ENCODE measurements at regions of chr2 and their contacts with region 1.

Region 1: DNA sequence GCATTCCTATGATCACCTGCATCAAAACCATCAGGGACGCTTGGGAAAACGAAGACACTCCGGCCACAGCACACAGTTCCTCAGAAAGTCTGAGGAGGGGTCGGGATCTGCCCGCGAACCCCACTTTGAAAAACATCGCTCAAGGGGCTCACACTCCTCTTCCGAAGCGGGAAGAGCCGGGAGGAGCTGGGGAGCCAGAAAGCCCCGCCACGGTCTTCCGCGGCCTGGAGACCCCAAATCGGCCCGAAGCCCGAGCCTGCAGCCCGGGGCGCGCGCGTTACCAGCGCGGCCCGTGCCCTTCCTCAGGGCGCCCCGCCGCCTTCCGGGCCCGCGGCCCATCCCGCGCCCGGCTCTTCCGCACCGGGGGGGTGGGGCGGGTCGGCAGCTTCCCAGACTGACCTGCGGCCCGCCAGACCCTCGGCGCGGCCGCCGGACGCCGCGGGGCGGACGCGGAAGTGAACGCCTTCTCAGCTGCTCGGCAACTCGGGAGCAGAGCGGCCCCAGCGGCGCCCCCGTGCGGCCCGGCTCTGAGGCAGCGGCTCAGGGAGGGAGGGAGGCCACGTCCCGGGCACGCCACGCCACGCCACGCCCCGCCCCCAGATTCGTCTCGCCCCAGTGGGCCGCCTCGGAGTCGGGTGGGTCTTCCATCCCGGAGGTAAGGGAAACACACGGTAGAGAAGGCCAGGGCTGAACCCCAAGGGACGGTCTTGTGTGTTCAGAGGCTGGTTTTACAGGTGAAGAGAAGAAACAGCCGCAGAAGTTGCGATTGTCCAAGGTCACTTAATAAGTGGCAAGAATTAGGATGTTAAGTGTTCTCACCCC is at the start of gene KCTD18:
- DNase-seq: peak; percentile 87 to 99 (median 94)

Region 2: GRCh38 chr2:200373973-200374416 is 135.8 kb before region 1 on chr2:
- intact Hi-C with region 1: no loop called
- DNase-seq: no peak

Region 3: DNA sequence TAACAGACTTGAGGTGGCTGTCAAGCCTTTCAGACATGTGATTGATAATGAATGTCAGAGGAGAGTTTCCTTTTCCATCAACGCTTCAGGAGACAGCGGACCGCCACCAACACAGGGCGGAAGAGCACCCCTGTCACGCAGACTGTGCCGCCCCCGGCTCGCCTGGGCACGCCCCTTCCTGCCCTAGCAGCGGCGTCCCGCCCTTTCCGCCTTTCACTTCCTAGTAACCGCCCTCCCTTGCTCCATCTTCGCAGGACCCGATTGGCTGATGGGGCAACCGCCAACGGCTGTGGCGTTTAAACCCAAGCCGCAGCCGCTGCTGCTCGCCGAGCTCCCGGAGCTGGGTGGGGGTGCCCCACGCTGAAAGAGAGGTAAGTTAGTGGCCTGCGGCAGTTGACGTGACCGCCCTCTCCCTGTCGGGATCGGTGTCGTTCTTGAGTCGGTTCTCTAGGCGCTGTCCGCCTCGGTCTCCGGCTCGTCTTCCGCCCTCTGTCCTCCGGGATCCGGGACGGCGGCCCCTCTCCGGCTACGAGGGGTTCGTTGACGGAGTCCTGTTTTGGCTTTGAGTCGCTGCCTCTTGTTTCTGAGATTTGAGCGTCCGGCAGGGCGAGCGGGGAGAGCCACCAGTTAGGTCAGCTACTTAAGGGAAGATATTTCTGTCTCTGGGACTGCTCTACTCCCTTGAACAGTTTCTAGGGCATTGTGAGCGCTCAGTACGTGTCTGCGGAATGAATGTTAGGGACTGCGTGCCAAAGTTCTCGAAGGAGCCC is 16.2 kb after region 1 on chr2 and contains the start of gene SGO2:
- intact Hi-C with region 1: loop called (anchors 1 kb)
- DNase-seq: peak; percentile 92 to 99 (median 96)